H1 (cell line): ENCODE measurements at regions of chr5 and their contacts with region 1.

Region 1: DNA sequence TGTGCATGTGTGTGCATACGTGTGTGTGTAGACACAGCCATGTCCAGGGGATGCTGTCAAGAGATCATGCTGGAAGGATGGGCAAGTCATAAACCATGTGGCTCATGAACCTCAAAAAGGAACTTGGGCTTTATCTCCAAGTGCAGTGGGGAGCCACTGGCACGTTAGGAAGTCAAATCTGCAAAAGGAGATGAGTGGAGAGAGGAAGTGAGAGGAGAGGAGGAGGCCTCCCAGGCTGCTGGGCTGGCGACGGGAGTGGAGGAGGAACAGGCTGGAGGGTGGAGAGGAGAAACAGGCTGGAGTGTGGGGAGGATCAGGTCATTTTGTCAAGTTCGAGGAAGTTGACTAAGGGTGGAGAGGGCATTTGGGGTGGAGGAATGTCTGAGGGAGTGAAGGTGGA is 29.2 kb upstream of the TIFAB start:
- DNase-seq: no peak
- H3K4me3 ChIP-seq: no peak overlapping the region
- H3K27ac ChIP-seq: no peak overlapping the region
- H3K4me1 ChIP-seq: peaks cover 0 to 24% (median 14%) of the 10 kb centered on the region in 4 experiments; a peak in 6 of 7 replicates
- H3K27me3 ChIP-seq: peaks cover 23 to 84% (median 76%) of the 10 kb centered on the region in 4 experiments
- CTCF ChIP-seq: no peak
- EP300 ChIP-seq: no peak
- POLR2A ChIP-seq: no peak
- RAD21 ChIP-seq: no peak

Region 2: GRCh38 chr5:135457424-135458071 is 23.8 kb before region 1 on chr5:
- CTCF ChIA-PET with region 1: interaction called, 137 read pairs
- POLR2A ChIA-PET with region 1: no interaction called
- DNase-seq: peak; percentile 25 to 90
- H3K4me3 ChIP-seq: no peak overlapping the region
- H3K27ac ChIP-seq: no peak overlapping the region
- H3K4me1 ChIP-seq: no peaks in the 10 kb centered on the region
- H3K27me3 ChIP-seq: peaks cover 0 to 14% (median 4%) of the 10 kb centered on the region in 4 experiments; a peak in 4 of 7 replicates
- CTCF ChIP-seq: peak; percentile 88 to 98 (median 96)
- EP300 ChIP-seq: no peak
- POLR2A ChIP-seq: no peak
- RAD21 ChIP-seq: peak; percentile 65 to 79